AG04450 (cell line): ENCODE measurements at regions of chr10 and their contacts with region 1.

Region 1: GRCh38 chr10:26881600-26882331 is 21.0 kb upstream of the ABI1 start:
- DNase-seq: peak; percentile 36
- H3K4me3 ChIP-seq: no peak overlapping the region
- H3K27ac ChIP-seq: no peak overlapping the region
- H3K27me3 ChIP-seq: no peaks in the 10 kb centered on the region
- CTCF ChIP-seq: peak; percentile 92

Region 2: GRCh38 chr10:26612151-26612915 is 269.4 kb before region 1 on chr10:
- CTCF ChIA-PET with region 1: interaction called, 12 read pairs
- POLR2A ChIA-PET with region 1: no interaction called
- DNase-seq: no peak
- H3K4me3 ChIP-seq: no peak overlapping the region
- H3K27ac ChIP-seq: no peak overlapping the region
- H3K27me3 ChIP-seq: no peaks in the 10 kb centered on the region
- CTCF ChIP-seq: no peak

Region 3: GRCh38 chr10:26682931-26683330 is 198.8 kb before region 1 on chr10:
- CTCF ChIA-PET with region 1: interaction called, 29 read pairs
- POLR2A ChIA-PET with region 1: no interaction called
- DNase-seq: no peak
- H3K4me3 ChIP-seq: no peak overlapping the region
- H3K27ac ChIP-seq: no peak overlapping the region
- H3K27me3 ChIP-seq: no peaks in the 10 kb centered on the region
- CTCF ChIP-seq: no peak

Region 4: DNA sequence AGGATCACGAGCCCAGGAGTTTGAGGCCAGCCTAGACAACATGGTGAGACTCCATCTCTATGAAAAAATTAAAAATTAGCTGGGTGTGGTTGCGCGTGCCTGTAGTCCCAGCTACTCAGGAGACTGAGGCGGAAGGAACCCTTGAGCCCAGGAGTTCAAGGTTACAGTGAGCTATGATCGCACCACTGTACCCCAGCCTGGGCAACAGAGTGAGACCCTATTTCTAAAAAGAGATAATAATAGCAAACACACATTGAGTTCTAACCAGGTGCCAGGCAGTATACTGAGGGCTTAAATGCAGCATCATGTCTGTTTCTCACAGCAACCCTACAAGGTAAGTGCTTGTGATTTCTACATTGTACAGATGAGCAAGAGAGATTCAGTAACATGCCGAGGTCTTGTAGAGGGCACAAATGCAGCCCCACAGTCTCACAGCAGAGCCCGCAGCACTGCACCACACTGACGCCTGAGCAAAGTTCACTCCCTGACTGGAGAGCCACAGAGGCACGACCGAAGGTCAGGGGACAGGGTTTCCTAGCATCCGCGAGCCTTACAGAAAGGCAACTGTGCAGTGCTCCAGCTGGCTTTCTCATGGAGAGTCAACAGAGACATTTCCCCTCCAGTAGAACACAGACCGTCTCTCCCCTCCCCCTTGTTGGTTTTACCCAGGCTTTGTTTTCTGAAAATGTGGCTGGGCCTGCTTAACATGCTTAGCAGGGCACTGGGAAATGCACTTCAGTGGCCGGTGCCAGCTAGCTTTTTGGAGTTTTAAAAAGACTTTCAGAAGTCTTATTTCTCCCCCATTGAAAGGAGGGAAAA is 147.8 kb before region 1 on chr10:
- CTCF ChIA-PET with region 1: interaction called, 375 read pairs
- POLR2A ChIA-PET with region 1: no interaction called
- DNase-seq: no peak
- H3K4me3 ChIP-seq: no peak overlapping the region
- H3K27ac ChIP-seq: no peak overlapping the region
- H3K27me3 ChIP-seq: no peaks in the 10 kb centered on the region
- CTCF ChIP-seq: no peak

Region 5: DNA sequence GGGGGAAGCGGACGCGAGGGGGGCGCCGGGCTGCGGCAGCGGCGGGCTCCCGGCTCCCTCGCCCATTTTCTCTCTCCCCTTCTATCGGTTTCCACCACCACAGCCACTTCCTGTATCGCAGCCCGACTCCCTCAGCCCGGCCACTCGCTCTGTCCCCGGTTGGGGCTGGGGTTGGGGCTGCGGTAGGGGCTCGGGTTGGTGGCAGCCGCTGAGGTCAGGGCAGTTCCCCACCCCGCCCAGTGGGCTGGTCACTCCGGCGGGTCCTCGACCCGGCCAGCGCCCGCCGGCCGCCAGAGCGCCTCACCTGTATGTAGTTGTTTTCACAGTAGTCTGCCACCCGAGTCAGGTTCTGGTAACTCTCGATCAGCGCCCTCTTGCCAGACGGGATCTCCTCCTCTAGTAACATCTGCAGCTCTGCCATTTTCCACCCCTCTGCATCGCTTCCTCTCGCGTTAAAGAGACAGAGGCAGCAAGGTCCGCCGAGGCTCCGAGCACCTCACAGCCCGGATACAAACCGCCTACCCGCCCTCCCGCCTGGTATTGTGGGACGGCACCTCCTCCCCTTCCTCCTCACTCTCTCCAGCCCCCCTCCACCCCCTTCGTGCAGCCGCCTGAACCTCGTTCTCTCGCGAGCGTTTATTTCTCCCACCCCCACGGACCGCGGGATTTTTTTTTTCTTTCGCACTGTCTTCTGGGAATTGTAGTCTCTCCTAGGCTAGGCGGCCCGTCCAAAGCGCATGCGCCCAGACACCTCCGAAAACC is 21.1 kb before region 1 on chr10 and contains the start of gene ABI1:
- CTCF ChIA-PET with region 1: interaction called, 51 read pairs
- POLR2A ChIA-PET with region 1: interaction called, 5 read pairs
- DNase-seq: peak; percentile 97
- H3K4me3 ChIP-seq: peak within 1 kb of the TSS; percentile 90
- H3K27ac ChIP-seq: peak within 1 kb of the TSS; percentile 70
- H3K27me3 ChIP-seq: peaks cover 4% of the 10 kb centered on the region
- CTCF ChIP-seq: no peak
- polyA plus RNA-seq, gene ABI1: 51.1 and 64.2 TPM in 2 replicates

Region 6: DNA sequence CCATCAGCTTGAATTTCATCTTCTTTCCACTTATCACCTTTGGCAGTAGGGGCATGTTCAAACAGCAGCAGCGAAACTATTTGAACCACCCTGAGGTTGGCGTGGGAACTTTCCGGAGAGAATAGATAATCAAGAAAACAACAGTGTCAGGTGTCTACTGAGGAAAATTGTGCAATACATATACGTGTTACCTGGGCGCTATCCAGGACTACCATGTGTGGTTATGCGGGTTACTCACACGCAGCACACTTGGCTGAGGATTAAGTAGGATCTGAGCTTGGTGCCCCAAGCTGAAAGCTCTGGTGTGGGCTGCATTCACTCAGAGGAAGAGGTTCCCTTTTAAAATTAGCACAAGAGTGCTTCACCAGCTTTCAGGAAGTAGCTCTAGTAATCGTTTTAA is 12.2 kb before region 1 on chr10:
- CTCF ChIA-PET with region 1: interaction called, 51 read pairs
- POLR2A ChIA-PET with region 1: interaction called, 8 read pairs
- DNase-seq: no peak
- H3K4me3 ChIP-seq: no peak overlapping the region
- H3K27ac ChIP-seq: no peak overlapping the region
- H3K27me3 ChIP-seq: peaks cover 3% of the 10 kb centered on the region
- CTCF ChIP-seq: no peak

Region 7: GRCh38 chr10:27490807-27491206 is 609.0 kb after region 1 on chr10:
- CTCF ChIA-PET with region 1: no interaction called
- POLR2A ChIA-PET with region 1: no interaction called
- DNase-seq: no peak
- H3K4me3 ChIP-seq: no peak overlapping the region
- H3K27ac ChIP-seq: no peak overlapping the region
- H3K27me3 ChIP-seq: peaks cover 2% of the 10 kb centered on the region
- CTCF ChIP-seq: no peak